ENCODE measurements at regions of chr6 and their contacts with region 1.

Region 1: DNA sequence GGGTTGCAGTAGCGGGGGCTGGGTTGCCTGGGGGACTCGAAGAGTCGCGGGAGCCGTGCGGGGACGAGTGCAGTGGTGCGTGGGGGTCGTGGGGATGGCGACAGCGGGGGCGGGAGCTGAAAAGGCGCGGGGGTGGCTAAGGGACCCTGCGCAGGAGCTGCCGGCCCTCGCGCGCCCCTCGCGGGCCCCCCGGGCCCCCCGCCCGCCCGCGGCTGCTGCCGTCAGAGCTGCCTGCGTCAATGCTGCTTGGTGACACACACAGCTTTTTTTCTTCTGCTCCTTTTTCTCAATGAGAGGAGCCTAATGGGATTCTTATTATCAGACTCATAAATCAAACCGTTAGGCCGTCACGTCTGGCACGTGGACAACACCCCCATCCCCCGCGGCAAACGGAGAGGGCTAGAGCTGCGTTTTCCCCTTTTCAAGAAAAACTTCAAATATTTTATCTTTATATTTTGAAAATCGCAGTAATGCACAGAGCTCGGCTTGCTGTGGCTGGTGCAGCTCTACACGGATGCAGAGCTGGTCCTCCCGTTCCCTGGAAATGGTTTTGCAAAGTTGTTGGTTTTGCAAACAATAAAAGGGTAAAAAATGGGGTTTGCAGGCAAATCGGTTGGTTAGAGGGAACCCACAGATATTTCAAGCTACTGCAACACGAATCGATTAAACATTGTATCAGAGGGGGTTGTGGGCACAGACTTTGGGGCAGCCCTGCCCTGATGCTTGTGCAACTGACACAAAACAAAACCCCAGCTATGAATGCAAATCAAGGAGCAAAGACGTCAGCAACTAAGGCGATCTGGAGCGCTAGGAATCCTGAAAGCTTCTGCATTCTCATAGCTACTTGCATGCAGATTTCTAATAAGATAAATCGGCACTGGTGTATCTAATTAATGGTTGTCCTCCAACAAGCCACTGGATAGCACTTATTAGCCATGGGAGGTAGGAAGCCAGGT is 161.4 kb downstream of the TBXT start:
- DNase-seq: no peak
- ATAC-seq: no peak
- H3K4me3 Mint-ChIP-seq: no peak overlapping the region
- H3K27ac Mint-ChIP-seq: no peak overlapping the region
- H3K4me1 Mint-ChIP-seq: no peaks in the 10 kb centered on the region
- H3K27me3 Mint-ChIP-seq: peaks cover 48% of the 10 kb centered on the region

Region 2: DNA sequence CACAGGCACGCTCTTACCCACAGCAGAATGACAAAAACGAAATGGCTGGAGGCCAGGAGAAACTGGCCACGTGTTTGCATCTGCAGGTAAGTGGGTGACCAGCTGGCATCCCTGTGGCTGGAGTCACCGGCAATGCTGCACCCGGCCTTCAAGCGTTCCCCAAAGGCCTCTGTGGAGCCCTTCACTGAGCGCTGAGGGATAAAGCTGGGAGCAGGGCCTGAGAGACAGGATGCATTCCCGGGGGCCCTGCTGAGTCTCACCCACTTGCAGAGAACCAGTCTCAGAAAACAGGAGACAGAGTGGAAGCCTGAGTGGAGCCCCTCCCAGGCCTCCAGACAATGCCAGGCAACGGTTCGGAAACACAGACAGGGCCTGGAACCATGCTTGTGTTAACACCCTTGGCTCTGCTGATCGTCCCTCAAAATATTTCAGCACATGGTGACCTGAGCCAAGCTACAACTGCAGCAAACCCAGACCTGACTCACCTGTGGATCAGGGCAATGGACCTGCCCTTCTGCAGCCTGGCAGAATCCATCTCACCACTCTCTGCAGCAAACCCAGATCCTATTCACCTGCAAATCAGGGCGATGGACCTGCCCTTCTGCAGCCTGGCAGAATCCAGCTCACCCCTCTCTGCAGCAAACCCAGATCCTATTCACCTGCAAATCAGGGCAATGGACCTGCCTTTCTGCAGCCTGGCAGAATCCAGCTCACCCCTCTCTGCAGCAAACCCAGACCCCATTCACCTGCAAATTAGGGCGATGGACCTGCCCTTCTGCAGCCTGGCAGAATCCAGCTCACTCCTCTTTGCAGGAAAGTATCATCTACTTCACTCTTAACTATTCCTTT is 121.6 kb after region 1 on chr6:
- CTCF ChIA-PET with region 1: no interaction called
- POLR2A ChIA-PET with region 1: no interaction called
- intact Hi-C with region 1: no loop called
- DNase-seq: no peak
- ATAC-seq: no peak
- H3K4me3 Mint-ChIP-seq: no peak overlapping the region
- H3K27ac Mint-ChIP-seq: no peak overlapping the region
- H3K4me1 Mint-ChIP-seq: no peaks in the 10 kb centered on the region
- H3K27me3 Mint-ChIP-seq: peaks cover 17% of the 10 kb centered on the region

Region 3: GRCh38 chr6:166167801-166168615 is 161.8 kb after region 1 on chr6 and contains the start of gene TBXT:
- CTCF ChIA-PET with region 1: no interaction called
- POLR2A ChIA-PET with region 1: no interaction called
- intact Hi-C with region 1: loop called (anchors 5 to 10 kb)
- DNase-seq: no peak
- ATAC-seq: no peak
- H3K4me3 Mint-ChIP-seq: peak within 1 kb of the TSS; percentile 52
- H3K27ac Mint-ChIP-seq: no peak within 1 kb of the TSS
- H3K4me1 Mint-ChIP-seq: peaks cover 5% of the 10 kb centered on the region
- H3K27me3 Mint-ChIP-seq: peaks cover 59% of the 10 kb centered on the region
- total RNA-seq, gene TBXT: not detected